Right ventricle myocardium inferior (tissue), 1 donor: ENCODE measurements at regions of chr18 and their contacts with region 1.

Region 1: GRCh38 chr18:74963820-74964446 is 245.0 kb downstream of the PTGR3 start:
- DNase-seq: no peak
- ATAC-seq: peak; percentile 72

Region 2: DNA sequence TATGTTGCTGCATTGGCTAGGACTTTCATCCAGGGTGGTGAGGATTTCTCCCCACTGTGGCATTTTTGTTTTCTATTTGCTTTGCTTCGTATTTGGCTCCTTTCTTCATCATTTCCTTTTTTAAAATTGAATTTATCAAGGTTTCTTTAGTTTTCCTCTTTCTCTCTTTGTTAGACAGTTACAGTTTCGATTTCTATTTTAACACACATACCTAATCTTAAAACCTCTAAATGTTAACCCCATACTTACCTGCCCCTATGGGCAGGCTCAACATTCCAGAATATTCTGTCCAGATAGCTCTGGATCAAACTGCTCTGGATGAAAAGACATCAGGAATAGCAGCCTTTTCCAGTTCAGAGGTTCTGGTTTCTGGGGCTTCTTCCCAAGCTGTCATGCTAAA is 556.0 kb before region 1 on chr18:
- intact Hi-C with region 1: no loop called
- DNase-seq: no peak
- ATAC-seq: no peak

Region 3: DNA sequence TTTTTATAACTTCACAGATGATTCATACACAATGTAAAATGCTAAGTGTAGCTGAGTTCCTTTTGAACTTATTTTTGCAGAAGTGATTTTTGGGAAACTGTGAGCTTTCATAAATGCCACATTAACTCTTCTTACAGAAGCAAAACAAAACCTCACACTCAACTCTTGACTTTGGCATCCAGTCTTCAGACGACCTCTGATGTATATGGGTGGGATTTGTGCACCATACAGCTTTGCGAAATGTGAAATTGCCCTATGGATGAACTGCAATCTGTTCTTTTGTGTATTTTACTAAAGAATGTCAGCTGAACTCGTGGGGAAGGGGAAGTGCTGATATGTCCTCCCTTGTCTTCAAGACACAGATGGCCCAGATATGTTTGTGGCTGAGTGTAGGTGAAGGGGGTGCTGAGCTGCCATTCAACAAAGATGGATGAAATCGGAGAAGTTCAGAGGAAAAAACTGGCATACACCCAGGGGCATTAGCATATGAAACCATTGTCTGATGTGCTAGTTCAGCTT is 26.7 kb after region 1 on chr18:
- intact Hi-C with region 1: loop called (anchors 1 kb)
- DNase-seq: no peak
- ATAC-seq: no peak

Region 4: DNA sequence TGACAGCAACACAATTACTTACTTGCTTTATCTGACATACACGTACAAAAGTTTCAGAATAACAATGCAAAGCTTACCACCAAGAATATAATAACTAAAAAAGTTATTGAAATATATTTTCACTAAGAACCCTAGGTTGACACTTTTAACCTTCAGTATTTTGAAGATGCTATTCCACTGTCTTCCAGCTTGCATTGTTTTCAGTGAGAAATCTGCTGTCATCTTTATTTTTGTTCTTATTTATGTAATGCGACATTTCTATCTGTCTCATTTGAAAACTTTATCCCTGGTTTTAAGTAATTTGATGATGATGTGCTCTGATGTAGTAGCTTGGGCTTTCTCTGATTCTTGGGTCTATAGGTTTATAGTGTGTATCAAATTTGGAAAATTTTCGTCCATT is 628.6 kb after region 1 on chr18:
- intact Hi-C with region 1: no loop called
- DNase-seq: no peak
- ATAC-seq: no peak